GM12878 (cell line): ENCODE measurements at regions of chr2 and their contacts with region 1.

Region 1: GRCh38 chr2:187581125-187581896 is 27.1 kb upstream of the TFPI start:
- DNase-seq: no peak
- ATAC-seq: peak; percentile 74
- H3K4me3 ChIP-seq: no peak overlapping the region
- H3K27ac ChIP-seq: no peak overlapping the region
- H3K4me1 ChIP-seq: no peaks in the 10 kb centered on the region
- H3K27me3 ChIP-seq: no peaks in the 10 kb centered on the region
- CTCF ChIP-seq: peak; percentile 54 to 68 (median 61); a peak in 5 of 6 replicates
- EP300 ChIP-seq: no peak
- POLR2A ChIP-seq: no peak
- RAD21 ChIP-seq: peak; percentile 45

Region 2: GRCh38 chr2:186862869-186863709 is 718.2 kb before region 1 on chr2:
- CTCF ChIA-PET with region 1: interaction called, 14 read pairs
- POLR2A ChIA-PET with region 1: no interaction called
- RAD21 ChIA-PET with region 1: interaction called, 16 read pairs
- SMC1A ChIA-PET with region 1: interaction called, 21 read pairs
- in situ Hi-C with region 1: no loop called
- intact Hi-C with region 1: loop called (anchors 5 kb)
- DNase-seq: no peak
- ATAC-seq: peak; percentile 79
- H3K4me3 ChIP-seq: no peak overlapping the region
- H3K27ac ChIP-seq: no peak overlapping the region
- H3K4me1 ChIP-seq: no peaks in the 10 kb centered on the region
- H3K27me3 ChIP-seq: no peaks in the 10 kb centered on the region
- CTCF ChIP-seq: peak; percentile 35 to 77 (median 48); a peak in 4 of 6 replicates
- EP300 ChIP-seq: no peak
- POLR2A ChIP-seq: no peak
- RAD21 ChIP-seq: peak; percentile 91

Region 3: GRCh38 chr2:187403568-187404260 is 177.6 kb before region 1 on chr2:
- CTCF ChIA-PET with region 1: no interaction called
- POLR2A ChIA-PET with region 1: no interaction called
- RAD21 ChIA-PET with region 1: no interaction called
- SMC1A ChIA-PET with region 1: no interaction called
- in situ Hi-C with region 1: no loop called
- intact Hi-C with region 1: no loop called
- DNase-seq: peak; percentile 15
- ATAC-seq: peak; percentile 57
- H3K4me3 ChIP-seq: no peak overlapping the region
- H3K27ac ChIP-seq: no peak overlapping the region
- H3K4me1 ChIP-seq: no peaks in the 10 kb centered on the region
- H3K27me3 ChIP-seq: no peaks in the 10 kb centered on the region
- CTCF ChIP-seq: no peak
- EP300 ChIP-seq: no peak
- POLR2A ChIP-seq: no peak
- RAD21 ChIP-seq: no peak

Region 4: DNA sequence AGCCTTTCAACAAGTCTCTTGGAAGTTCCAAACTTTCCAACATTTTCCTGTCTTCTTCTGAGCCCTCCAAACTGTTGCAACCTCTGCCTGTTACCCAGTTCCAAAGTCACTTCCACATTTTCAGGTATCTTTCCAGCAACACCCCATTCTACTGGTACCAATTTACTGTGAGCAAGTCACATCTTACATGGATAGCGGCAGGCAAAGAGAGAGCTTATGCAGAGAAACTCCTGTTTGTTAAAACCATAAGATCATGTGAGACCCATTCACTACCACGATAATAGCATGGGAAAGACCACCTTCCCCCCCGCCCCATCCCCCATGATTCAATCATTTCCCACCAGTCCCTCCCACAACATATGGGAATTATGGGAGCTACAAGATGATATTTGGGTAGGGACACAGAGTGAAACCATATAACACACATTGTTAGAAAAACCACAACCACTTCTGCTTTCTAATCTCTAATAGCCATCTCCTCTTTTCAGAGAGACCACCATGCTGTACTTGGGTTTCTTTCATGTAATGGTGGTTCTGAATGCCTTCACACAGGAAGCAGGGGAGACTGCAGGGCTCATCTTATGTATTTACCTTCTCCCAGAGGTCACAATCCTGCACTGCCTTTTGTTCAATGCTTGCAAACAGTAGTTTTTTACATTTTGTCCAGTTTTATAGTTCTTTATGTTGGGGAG is 87.3 kb before region 1 on chr2:
- CTCF ChIA-PET with region 1: interaction called, 562 read pairs
- POLR2A ChIA-PET with region 1: interaction called, 11 read pairs
- RAD21 ChIA-PET with region 1: interaction called, 297 read pairs
- SMC1A ChIA-PET with region 1: interaction called, 389 read pairs
- in situ Hi-C with region 1: no loop called
- intact Hi-C with region 1: no loop called
- DNase-seq: no peak
- ATAC-seq: peak; percentile 54
- H3K4me3 ChIP-seq: no peak overlapping the region
- H3K27ac ChIP-seq: no peak overlapping the region
- H3K4me1 ChIP-seq: no peaks in the 10 kb centered on the region
- H3K27me3 ChIP-seq: no peaks in the 10 kb centered on the region
- CTCF ChIP-seq: no peak
- EP300 ChIP-seq: no peak
- POLR2A ChIP-seq: no peak
- RAD21 ChIP-seq: no peak

Region 5: DNA sequence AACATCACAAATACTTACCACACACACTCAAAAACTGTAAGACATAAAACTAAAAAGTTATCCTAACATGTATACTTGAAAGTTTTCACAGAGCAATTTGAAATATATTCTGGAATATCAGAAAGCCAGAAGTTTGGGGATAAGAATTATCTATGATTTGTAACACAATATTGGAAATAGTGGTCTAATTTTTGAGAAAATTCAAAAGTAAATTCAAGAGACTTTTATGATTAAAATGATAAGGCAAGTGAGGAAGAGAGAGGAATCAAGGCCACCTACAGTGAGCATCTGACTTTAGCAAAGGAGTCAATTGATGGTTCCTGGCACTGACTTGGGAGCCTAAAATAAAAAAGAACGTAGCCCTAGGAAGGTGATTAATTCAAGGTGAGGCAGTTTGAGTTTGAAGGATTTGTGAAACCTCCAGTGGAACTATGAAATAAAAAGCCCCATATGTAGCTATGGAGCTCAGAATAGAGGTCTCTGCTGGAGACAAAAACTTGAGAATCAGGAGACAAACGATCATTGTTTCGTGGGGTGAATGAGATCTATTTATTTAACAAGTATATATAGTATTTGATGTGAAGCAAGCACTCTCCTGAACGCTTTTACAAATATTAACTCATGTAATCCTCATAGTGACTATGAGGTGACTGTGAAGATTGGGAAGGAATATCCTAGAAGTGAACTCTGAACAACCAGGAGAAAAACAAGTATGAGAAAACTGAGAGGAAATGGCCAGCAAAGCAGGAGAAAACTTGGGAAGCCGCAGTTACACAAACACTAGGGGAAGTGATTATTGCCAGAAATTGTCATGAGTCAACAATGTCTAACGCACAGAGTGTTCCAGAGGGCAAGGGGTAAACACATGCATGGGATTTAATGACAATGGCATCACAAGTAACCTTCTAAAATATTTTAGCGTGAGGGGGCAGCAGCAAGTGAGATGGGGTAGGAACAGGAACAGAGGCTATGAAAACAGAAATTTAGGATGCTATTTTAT is 39.9 kb before region 1 on chr2:
- CTCF ChIA-PET with region 1: interaction called, 36 read pairs
- POLR2A ChIA-PET with region 1: no interaction called
- RAD21 ChIA-PET with region 1: interaction called, 7 read pairs
- SMC1A ChIA-PET with region 1: interaction called, 5 read pairs
- in situ Hi-C with region 1: no loop called
- intact Hi-C with region 1: no loop called
- DNase-seq: no peak
- ATAC-seq: no peak
- H3K4me3 ChIP-seq: no peak overlapping the region
- H3K27ac ChIP-seq: no peak overlapping the region
- H3K4me1 ChIP-seq: no peaks in the 10 kb centered on the region
- H3K27me3 ChIP-seq: no peaks in the 10 kb centered on the region
- CTCF ChIP-seq: no peak
- EP300 ChIP-seq: no peak
- POLR2A ChIP-seq: no peak
- RAD21 ChIP-seq: no peak

Region 6: GRCh38 chr2:187554011-187554703 is 27.2 kb before region 1 on chr2 and contains the start of gene TFPI:
- CTCF ChIA-PET with region 1: interaction called, 36 read pairs
- POLR2A ChIA-PET with region 1: no interaction called
- RAD21 ChIA-PET with region 1: interaction called, 6 read pairs
- SMC1A ChIA-PET with region 1: interaction called, 16 read pairs
- in situ Hi-C with region 1: no loop called
- intact Hi-C with region 1: no loop called
- DNase-seq: no peak
- ATAC-seq: peak; percentile 60
- H3K4me3 ChIP-seq: no peak within 1 kb of the TSS
- H3K27ac ChIP-seq: no peak within 1 kb of the TSS
- H3K4me1 ChIP-seq: no peaks in the 10 kb centered on the region
- H3K27me3 ChIP-seq: no peaks in the 10 kb centered on the region
- CTCF ChIP-seq: no peak
- EP300 ChIP-seq: no peak
- POLR2A ChIP-seq: no peak
- RAD21 ChIP-seq: no peak
- polyA plus RNA-seq, gene TFPI: 0.42 to 0.53 TPM

Region 7: DNA sequence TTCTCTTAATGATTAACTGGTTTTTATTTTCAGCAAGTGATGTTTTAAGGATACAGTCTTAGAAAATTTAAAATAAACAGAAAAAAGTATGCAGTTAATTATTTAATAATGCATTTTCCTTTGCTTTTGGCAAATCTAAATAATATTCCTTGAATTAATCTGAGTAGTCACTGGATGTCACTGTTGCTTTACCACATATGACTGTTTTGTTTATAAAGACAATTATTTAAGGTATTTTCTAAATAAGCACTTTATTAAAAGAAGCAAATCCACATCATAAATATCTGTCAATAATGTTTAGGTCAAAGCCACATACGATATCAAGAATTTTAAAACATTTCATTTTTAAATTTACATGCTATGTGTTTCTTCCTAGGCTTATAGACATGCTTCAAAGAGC is 13.5 kb after region 1 on chr2:
- CTCF ChIA-PET with region 1: interaction called, 19 read pairs
- POLR2A ChIA-PET with region 1: no interaction called
- RAD21 ChIA-PET with region 1: interaction called, 7 read pairs
- SMC1A ChIA-PET with region 1: interaction called, 4 read pairs
- in situ Hi-C with region 1: no loop called
- intact Hi-C with region 1: no loop called
- DNase-seq: no peak
- ATAC-seq: no peak
- H3K4me3 ChIP-seq: no peak overlapping the region
- H3K27ac ChIP-seq: no peak overlapping the region
- H3K4me1 ChIP-seq: no peaks in the 10 kb centered on the region
- H3K27me3 ChIP-seq: no peaks in the 10 kb centered on the region
- CTCF ChIP-seq: no peak
- EP300 ChIP-seq: no peak
- POLR2A ChIP-seq: no peak
- RAD21 ChIP-seq: no peak

Region 8: DNA sequence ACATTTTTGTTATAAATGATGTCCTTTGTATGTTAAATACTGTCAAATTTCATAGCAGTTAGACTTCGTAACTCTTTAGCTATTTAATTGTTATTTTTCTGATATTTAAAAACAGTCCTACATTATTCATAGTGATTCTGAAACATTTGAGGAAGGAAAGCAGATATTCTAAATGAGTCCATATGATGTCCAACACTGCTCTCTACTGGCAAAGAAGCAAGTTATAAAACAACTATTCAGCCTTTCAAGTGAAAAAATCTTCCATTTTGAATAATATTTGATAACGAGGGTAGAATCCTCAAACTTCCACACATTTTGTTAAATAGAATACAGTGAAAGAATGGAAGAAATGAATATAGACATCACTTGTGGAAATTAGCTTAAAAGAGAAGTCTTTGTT is 931.1 kb after region 1 on chr2:
- CTCF ChIA-PET with region 1: interaction called, 14 read pairs
- POLR2A ChIA-PET with region 1: no interaction called
- RAD21 ChIA-PET with region 1: no interaction called
- SMC1A ChIA-PET with region 1: interaction called, 5 read pairs
- in situ Hi-C with region 1: no loop called
- intact Hi-C with region 1: loop called (anchors 2 kb)
- DNase-seq: no peak
- ATAC-seq: peak; percentile 64
- H3K4me3 ChIP-seq: no peak overlapping the region
- H3K27ac ChIP-seq: no peak overlapping the region
- H3K4me1 ChIP-seq: no peaks in the 10 kb centered on the region
- H3K27me3 ChIP-seq: no peaks in the 10 kb centered on the region
- CTCF ChIP-seq: peak; percentile 17 to 58 (median 24); a peak in 4 of 6 replicates
- EP300 ChIP-seq: no peak
- POLR2A ChIP-seq: no peak
- RAD21 ChIP-seq: peak; percentile 67